ENCODE measurements at regions of chr3 and their contacts with region 1.

Region 1: GRCh38 chr3:44114142-44114541 is 127.5 kb upstream of the TOPAZ1 start:
- DNase-seq: peak; percentile 13
- ATAC-seq: peak; percentile 95
- H3K4me3 ChIP-seq: no peak overlapping the region
- H3K27ac ChIP-seq: no peak overlapping the region
- H3K4me1 ChIP-seq: no peaks in the 10 kb centered on the region
- H3K27me3 ChIP-seq: peaks cover 0 to 11% of the 10 kb centered on the region in 2 experiments; a peak in 1 of 5 replicates
- CTCF ChIP-seq: peak; percentile 72
- EP300 ChIP-seq: no peak
- POLR2A ChIP-seq: no peak
- RAD21 ChIP-seq: peak; percentile 46; the same call in 1 of the 2 replicates

Region 2: DNA sequence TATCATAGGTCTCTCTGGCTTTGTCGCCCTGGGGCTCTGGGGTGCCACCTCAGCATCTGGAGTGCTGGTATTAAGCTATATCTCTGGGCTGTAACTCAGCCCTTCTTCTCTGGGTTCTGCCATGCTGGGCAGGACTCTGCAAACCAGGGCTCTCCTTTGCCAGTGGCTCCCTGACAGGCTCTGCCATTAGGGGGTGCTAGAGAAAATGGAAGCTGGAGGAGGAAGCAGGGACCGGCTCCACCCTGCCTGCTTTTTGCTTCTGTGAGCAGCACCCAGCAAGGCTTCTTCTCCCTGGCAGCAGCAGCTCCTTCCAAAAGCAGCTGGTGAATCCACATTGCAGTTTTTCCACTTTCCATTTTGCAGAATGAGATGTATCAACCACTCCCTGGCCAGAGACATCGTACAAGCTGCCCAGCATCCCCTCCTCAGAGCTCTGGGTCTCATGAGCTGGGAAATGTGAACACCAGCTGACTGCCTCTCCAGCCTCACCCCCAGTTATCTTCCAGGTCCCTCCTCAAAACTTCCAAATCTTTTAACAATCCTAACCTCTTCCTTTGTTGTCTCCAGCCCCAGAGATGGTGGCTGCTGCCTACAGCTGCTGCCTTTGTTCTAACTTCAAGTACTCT is 258.4 kb before region 1 on chr3:
- CTCF ChIA-PET with region 1: no interaction called
- POLR2A ChIA-PET with region 1: no interaction called
- in situ Hi-C with region 1: loop called (anchors 10 kb)
- intact Hi-C with region 1: loop called (anchors 10 kb)
- DNase-seq: peak; percentile 11
- ATAC-seq: peak; percentile 94
- H3K4me3 ChIP-seq: no peak overlapping the region
- H3K27ac ChIP-seq: no peak overlapping the region
- H3K4me1 ChIP-seq: no peaks in the 10 kb centered on the region
- H3K27me3 ChIP-seq: peaks cover 2 to 7% of the 10 kb centered on the region in 2 experiments; a peak in 4 of 5 replicates
- CTCF ChIP-seq: peak; percentile 66
- EP300 ChIP-seq: no peak
- POLR2A ChIP-seq: no peak
- RAD21 ChIP-seq: 0 out of 2 replicates have a peak, but pooled peaks have one; percentile 27

Region 3: GRCh38 chr3:44175070-44175469 is 60.9 kb after region 1 on chr3:
- CTCF ChIA-PET with region 1: no interaction called
- POLR2A ChIA-PET with region 1: no interaction called
- in situ Hi-C with region 1: no loop called
- intact Hi-C with region 1: no loop called
- DNase-seq: no peak
- ATAC-seq: no peak
- H3K4me3 ChIP-seq: no peak overlapping the region
- H3K27ac ChIP-seq: no peak overlapping the region
- H3K4me1 ChIP-seq: no peaks in the 10 kb centered on the region
- H3K27me3 ChIP-seq: no peaks in the 10 kb centered on the region
- CTCF ChIP-seq: no peak
- EP300 ChIP-seq: no peak
- POLR2A ChIP-seq: no peak
- RAD21 ChIP-seq: no peak

Region 4: DNA sequence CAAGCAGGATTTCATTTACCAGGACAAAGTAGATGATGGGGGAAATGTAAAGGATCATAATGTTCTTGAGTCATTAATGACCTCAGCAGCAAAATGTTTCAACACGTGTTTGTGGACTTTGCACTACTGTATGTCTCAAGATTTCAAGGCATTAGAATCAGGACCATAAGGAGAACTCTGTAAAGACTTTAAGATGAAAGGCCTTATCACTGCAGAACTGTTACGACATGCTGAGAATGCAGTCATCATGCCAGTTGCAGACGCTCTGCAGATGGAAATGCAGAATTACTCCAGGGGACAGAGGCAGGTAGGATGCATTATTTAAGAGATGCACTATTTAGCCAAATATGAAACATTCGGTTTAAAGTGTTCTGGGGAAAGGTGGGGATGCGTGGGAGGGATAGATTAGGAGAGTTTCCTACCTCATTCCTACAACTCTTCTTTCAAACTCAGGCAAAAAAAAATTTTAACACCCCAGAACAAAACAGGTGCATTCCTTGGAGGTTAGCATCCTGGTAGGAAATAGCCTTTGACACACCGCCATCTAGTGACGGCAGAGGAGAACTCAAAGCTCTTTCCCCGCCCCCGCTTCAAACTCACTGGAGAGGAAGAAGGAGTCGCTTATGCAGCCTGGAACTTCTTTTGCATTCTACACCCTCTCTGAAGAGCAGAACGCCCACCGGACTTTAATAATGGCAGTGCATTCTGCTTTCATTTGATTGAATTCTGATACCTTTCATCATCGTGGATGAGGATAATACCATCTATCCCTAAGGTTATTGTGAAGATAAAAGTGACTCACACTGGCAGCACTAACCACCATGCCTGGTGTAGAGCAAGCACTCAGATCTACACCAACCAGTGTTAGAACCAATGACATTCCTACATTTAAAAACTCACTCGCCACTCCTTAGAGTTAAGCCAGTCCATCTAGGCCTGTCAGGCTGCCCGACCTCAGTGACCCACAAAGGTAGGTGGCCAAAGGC is 84.4 kb after region 1 on chr3:
- CTCF ChIA-PET with region 1: no interaction called
- POLR2A ChIA-PET with region 1: no interaction called
- in situ Hi-C with region 1: no loop called
- intact Hi-C with region 1: no loop called
- DNase-seq: peak; percentile 55
- ATAC-seq: peak; percentile 84
- H3K4me3 ChIP-seq: no peak overlapping the region
- H3K27ac ChIP-seq: no peak overlapping the region
- H3K4me1 ChIP-seq: no peaks in the 10 kb centered on the region
- H3K27me3 ChIP-seq: peaks cover 0 to 2% of the 10 kb centered on the region in 2 experiments; a peak in 1 of 5 replicates
- CTCF ChIP-seq: peak; percentile 84
- EP300 ChIP-seq: no peak
- POLR2A ChIP-seq: no peak
- RAD21 ChIP-seq: peak; percentile 71

Region 5: GRCh38 chr3:44418549-44418948 is 304.4 kb after region 1 on chr3:
- CTCF ChIA-PET with region 1: no interaction called
- POLR2A ChIA-PET with region 1: no interaction called
- in situ Hi-C with region 1: no loop called
- intact Hi-C with region 1: no loop called
- DNase-seq: peak; percentile 26
- ATAC-seq: peak; percentile 22; the same call in 2 of the 3 replicates
- H3K4me3 ChIP-seq: no peak overlapping the region
- H3K27ac ChIP-seq: no peak overlapping the region
- H3K4me1 ChIP-seq: peaks cover 44% of the 10 kb centered on the region
- H3K27me3 ChIP-seq: peaks cover 0 to 5% of the 10 kb centered on the region in 2 experiments; a peak in 2 of 5 replicates
- CTCF ChIP-seq: peak; percentile 42
- EP300 ChIP-seq: no peak
- POLR2A ChIP-seq: no peak
- RAD21 ChIP-seq: no peak

Region 6: GRCh38 chr3:45043728-45044299 is 929.7 kb after region 1 on chr3:
- CTCF ChIA-PET with region 1: no interaction called
- POLR2A ChIA-PET with region 1: no interaction called
- in situ Hi-C with region 1: no loop called
- intact Hi-C with region 1: no loop called
- DNase-seq: no peak
- ATAC-seq: no peak
- H3K4me3 ChIP-seq: no peak overlapping the region
- H3K27ac ChIP-seq: no peak overlapping the region
- H3K4me1 ChIP-seq: no peaks in the 10 kb centered on the region
- H3K27me3 ChIP-seq: peaks cover 0 to 9% of the 10 kb centered on the region in 2 experiments; a peak in 2 of 5 replicates
- CTCF ChIP-seq: no peak
- EP300 ChIP-seq: no peak
- POLR2A ChIP-seq: no peak
- RAD21 ChIP-seq: no peak